Aorta (tissue), 5 donors: ENCODE measurements at regions of chr1 and their contacts with region 1.

Region 1: GRCh38 chr1:76754730-76755129 is 112.5 kb upstream of the ST6GALNAC5 start:
- DNase-seq: no peak
- ATAC-seq: no peak
- H3K4me3 ChIP-seq: no peak overlapping the region
- H3K27ac ChIP-seq: no peak overlapping the region
- H3K4me1 ChIP-seq: no peaks in the 10 kb centered on the region
- H3K27me3 ChIP-seq: no peaks in the 10 kb centered on the region

Region 2: GRCh38 chr1:76799700-76800099 is 45.0 kb after region 1 on chr1:
- intact Hi-C with region 1: loop called in 1 of 2 experiments (anchors 5 kb)
- DNase-seq: no peak
- ATAC-seq: no peak
- H3K4me3 ChIP-seq: no peak overlapping the region
- H3K27ac ChIP-seq: no peak overlapping the region
- H3K4me1 ChIP-seq: peaks cover 0 to 2% of the 10 kb centered on the region in 2 donors
- H3K27me3 ChIP-seq: no peaks in the 10 kb centered on the region

Region 3: GRCh38 chr1:76830373-76830772 is 75.6 kb after region 1 on chr1:
- intact Hi-C with region 1: no loop called
- DNase-seq: no peak
- ATAC-seq: no peak
- H3K4me3 ChIP-seq: no peak overlapping the region
- H3K27ac ChIP-seq: no peak overlapping the region
- H3K4me1 ChIP-seq: no peaks in the 10 kb centered on the region
- H3K27me3 ChIP-seq: no peaks in the 10 kb centered on the region